ENCODE measurements at regions of chr11 and their contacts with region 1.

Region 1: DNA sequence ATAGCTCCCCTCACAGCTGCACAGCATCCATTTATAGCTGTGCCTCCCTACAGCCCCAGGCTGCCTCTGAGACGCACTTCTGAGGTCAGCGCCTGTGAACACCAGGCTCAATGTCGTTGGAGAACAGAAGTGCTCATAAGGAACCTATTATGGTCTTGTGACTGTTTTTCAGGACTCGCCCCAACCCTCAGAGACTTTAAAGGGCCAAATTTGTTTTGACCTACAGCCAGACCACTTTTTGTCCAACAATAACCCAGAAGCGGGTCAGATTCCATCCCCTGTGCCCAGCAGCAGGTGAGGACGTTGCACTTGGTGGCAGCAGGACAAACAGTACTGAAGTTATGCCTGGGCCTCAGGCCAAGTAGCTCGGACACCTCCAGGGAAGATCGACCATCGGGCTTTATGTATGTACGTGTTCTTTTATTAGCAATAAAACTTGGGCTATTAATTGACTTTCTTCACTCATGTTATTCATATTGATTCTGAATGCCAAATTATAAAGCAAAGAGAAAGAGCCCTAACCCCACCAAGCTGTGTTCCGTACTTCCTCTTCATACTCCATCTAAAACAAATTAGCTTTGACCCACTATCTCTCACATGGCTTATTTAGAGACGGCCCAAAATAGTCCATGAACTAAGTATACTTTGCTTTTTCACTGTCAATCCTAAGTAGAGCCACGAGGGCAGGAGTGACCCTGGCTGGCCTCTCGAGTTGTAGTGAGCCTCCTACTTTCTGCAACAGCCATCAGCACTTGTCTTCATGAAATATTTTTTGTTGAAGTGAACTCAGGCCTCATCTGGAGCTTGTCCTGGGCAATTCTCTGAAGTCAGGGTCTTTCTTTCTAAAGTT is 92.3 kb upstream of the PAX6 start:
- DNase-seq: peak; percentile 39 to 42
- ATAC-seq: peak; percentile 79 to 94 (median 92)
- H3K4me3 ChIP-seq: no peak overlapping the region
- H3K27ac ChIP-seq: peak overlapping the region; percentile 48 to 87 (median 77)
- H3K4me1 ChIP-seq: peaks cover 0 to 18% (median 6%) of the 10 kb centered on the region in 9 donors
- H3K27me3 ChIP-seq: no peaks in the 10 kb centered on the region
- CTCF ChIP-seq: no peak

Region 2: DNA sequence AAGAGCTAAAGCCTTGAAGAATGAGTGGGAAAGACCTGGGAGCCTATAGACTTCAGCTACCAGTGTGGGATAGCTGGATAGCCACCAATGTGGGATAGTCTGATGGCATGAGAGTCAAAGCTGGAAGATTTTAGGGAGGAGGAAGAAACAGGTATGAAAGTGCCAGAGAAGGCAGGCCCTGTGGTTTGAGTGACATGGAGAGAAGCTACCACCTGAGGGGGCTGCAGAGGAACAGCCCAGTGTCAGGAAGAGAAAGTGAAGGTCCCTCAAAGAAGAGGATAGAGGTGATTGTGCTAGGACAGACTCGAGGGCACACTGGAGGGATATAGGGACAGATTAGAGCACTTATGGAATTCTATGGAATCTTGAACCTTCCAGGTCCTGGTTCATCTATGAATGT is 69.2 kb before region 1 on chr11:
- intact Hi-C with region 1: no loop called
- DNase-seq: no peak
- ATAC-seq: no peak
- H3K4me3 ChIP-seq: no peak overlapping the region
- H3K27ac ChIP-seq: no peak overlapping the region
- H3K4me1 ChIP-seq: no peaks in the 10 kb centered on the region
- H3K27me3 ChIP-seq: peaks cover 0 to 100% (median 96%) of the 10 kb centered on the region in 7 donors
- CTCF ChIP-seq: no peak

Region 3: DNA sequence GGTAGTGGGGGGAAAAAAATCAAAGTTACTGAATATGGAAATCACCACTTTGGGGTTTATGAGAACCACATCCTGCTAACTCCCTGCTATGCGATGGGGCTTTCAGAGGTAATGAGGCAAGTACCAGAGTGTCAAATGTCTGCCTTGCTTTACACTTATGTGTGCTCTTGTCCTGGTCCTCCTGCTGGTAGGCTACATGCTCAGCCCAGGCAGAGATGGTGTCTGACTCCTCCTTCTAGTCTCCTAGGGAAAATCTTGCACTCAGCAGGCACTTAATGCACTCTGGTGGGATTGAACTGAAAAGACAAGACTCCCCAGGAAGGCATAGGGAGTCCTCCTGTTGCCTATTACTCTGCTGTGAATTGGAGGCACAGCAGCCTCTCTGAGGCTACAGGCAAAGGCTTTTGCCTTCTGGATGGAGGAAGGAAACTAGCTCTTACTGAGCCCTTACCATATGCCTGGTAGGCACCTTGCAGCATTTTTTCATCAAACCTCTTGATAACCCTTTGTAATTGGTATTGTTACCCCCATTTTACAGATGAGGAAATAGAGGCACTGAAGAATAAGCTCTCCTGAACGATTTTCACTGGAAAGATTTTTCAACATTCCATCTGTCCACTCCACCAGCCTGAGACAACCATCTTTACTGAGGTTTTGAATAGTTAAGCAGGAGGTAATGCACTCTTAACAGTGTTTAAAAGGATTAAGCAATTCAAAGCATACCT is 39.8 kb after region 1 on chr11:
- intact Hi-C with region 1: loop called in 2 of 10 experiments (anchors 2 to 5 kb)
- DNase-seq: no peak
- ATAC-seq: no peak
- H3K4me3 ChIP-seq: no peak overlapping the region
- H3K27ac ChIP-seq: no peak overlapping the region
- H3K4me1 ChIP-seq: peaks cover 0 to 20% (median 7%) of the 10 kb centered on the region in 9 donors
- H3K27me3 ChIP-seq: peaks cover 0 to 5% (median 0%) of the 10 kb centered on the region in 7 donors
- CTCF ChIP-seq: no peak